PC-3 (cell line): ENCODE measurements at regions of chr2 and their contacts with region 1.

Region 1: GRCh38 chr2:175964195-175964594 is 37.9 kb downstream of the LNPK start:
- DNase-seq: peak; percentile 27
- ATAC-seq: peak; percentile 64
- H3K4me3 ChIP-seq: no peak overlapping the region
- H3K27ac ChIP-seq: no peak overlapping the region
- H3K4me1 ChIP-seq: 0 out of 2 replicates have a peak, but pooled peaks cover 4% of the 10 kb centered on the region
- H3K27me3 ChIP-seq: no peaks in the 10 kb centered on the region
- CTCF ChIP-seq: peak; percentile 50

Region 2: DNA sequence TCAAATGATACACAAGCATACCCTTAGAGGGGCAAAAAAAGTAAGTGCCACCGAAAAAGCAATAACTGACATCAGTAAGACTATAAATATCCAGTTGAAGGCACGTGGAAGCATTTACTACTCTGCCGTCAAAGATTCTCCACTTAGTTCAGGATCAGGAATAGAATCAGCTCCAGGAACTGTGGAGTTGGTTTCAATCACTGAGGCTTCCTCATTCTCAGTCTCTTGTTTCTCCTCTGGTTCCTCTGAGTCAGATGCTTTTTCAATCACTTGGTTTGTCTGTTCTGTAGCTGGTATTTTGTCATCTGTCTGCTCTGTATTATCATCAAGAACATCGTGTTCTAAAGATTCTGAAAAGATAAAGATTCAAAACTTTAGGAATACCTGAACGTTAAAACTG is 34.3 kb before region 1 on chr2:
- CTCF ChIA-PET with region 1: no interaction called
- POLR2A ChIA-PET with region 1: no interaction called
- intact Hi-C with region 1: loop called (anchors 5 kb)
- DNase-seq: no peak
- ATAC-seq: peak; percentile 25; the same call in 1 of the 2 replicates
- H3K4me3 ChIP-seq: no peak overlapping the region
- H3K27ac ChIP-seq: peak overlapping the region; percentile 51
- H3K4me1 ChIP-seq: peaks cover 19% of the 10 kb centered on the region
- H3K27me3 ChIP-seq: no peaks in the 10 kb centered on the region
- CTCF ChIP-seq: no peak